Stomach (tissue), 19 donors: ENCODE measurements at regions of chr14 and their contacts with region 1.

Region 1: GRCh38 chr14:22466491-22466890 is 122.5 kb downstream of the DAD1 start:
- DNase-seq: no peak
- H3K4me3 ChIP-seq: no peak overlapping the region
- H3K27ac ChIP-seq: no peak overlapping the region
- H3K4me1 ChIP-seq: peaks cover 0 to 25% (median 9%) of the 10 kb centered on the region in 4 donors
- H3K27me3 ChIP-seq: no peaks in the 10 kb centered on the region
- CTCF ChIP-seq: no peak
- EP300 ChIP-seq: no peak
- POLR2A ChIP-seq: no peak

Region 2: DNA sequence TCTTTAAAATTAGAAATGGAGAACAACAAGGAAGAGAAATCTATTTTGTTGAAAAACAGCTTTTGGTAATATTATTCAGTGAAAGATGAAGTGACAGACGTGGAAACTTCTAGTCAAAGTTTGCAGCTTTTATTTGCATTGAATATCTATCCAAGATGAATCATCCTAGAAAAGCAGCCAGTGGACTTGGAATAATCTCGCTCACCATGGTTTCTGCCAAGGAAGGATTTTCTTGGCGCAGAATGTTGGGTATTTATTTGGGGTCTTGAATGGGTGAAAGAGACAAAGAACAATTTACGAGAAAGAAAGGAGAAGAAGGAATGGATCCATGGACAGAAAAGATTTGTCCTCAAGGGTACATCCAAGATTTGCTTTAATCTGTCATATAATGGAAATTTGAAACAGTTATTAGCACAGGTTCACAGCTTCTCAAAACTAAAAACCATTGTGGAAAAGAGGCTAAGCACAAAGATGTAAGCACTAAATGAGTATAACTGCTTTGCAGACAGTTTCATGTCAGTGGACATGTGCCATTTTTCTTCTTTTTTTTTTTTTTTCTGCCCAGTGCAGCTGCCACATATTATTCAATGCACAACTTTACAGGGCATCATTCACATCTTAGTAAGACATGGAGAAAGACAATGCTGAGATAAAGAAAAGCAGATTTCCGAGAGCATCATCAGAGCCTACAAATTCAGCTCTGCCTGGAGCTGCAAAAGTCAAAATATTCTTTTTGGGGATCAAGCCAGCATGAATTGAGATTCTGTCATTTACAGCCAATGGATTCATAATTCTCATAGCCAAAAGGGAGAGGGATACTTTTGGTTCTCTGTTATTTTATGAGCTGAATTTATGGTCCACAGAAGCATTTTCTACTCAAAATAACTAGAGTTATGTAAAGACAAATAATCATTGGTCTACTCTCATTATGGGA is 211.2 kb before region 1 on chr14:
- intact Hi-C with region 1: no loop called
- DNase-seq: no peak
- H3K4me3 ChIP-seq: no peak overlapping the region
- H3K27ac ChIP-seq: no peak overlapping the region
- H3K4me1 ChIP-seq: no peaks in the 10 kb centered on the region
- H3K27me3 ChIP-seq: no peaks in the 10 kb centered on the region
- CTCF ChIP-seq: no peak
- EP300 ChIP-seq: no peak
- POLR2A ChIP-seq: no peak

Region 3: DNA sequence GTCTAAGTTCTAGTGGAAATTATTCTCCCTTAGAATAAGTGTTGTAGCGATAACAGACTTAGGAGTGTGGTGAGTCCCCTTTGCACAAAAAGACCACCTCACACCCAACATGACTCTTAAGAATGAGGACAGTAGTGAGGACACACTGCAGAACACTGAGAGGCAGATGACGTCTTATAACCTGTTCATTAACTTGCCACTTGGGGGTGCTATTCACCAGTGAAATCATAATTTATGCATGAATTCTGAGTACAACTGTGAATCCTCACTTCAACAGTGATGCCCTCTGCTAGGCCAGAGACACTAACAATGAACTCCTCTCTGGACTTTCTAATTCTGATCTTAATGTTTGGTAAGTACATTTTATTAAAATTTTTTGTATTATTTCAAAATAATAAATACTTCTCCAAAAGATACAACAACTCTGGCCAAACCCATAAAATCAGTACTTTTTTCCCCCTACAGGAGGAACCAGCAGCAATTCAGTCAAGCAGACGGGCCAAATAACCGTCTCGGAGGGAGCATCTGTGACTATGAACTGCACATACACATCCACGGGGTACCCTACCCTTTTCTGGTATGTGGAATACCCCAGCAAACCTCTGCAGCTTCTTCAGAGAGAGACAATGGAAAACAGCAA is 152.2 kb before region 1 on chr14:
- intact Hi-C with region 1: loop called (anchors 10 kb)
- DNase-seq: peak in 1 of 2 donors; percentile 73
- H3K4me3 ChIP-seq: no peak overlapping the region
- H3K27ac ChIP-seq: no peak overlapping the region
- H3K4me1 ChIP-seq: no peaks in the 10 kb centered on the region
- H3K27me3 ChIP-seq: no peaks in the 10 kb centered on the region
- CTCF ChIP-seq: peak in 5 of 7 experiments; percentile 7 to 58 (median 53)
- EP300 ChIP-seq: no peak
- POLR2A ChIP-seq: no peak

Region 4: DNA sequence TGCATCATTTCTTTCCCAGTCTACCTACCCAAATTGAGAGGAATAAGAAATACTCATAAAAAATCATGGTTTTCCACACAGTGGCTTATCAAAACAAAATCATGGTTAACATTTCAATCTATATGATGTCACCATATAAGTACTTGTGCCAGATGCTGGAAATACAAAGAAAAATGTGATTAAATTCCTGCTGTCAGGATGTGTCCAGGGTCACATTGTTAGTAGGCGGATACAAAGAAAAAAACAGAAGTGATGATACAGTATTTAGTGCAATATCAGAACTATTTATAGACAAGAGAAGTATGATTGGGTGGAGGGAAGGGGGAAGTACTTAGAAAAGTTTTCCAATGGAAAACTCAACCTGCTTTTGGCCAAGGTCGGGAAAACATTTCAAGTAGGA is 224.7 kb after region 1 on chr14:
- intact Hi-C with region 1: no loop called
- DNase-seq: peak in 1 of 2 donors; percentile 14
- H3K4me3 ChIP-seq: no peak overlapping the region
- H3K27ac ChIP-seq: no peak overlapping the region
- H3K4me1 ChIP-seq: no peaks in the 10 kb centered on the region
- H3K27me3 ChIP-seq: no peaks in the 10 kb centered on the region
- CTCF ChIP-seq: no peak
- EP300 ChIP-seq: no peak
- POLR2A ChIP-seq: no peak